MCF 10A (cell line): ENCODE measurements at regions of chr7 and their contacts with region 1.

Region 1: DNA sequence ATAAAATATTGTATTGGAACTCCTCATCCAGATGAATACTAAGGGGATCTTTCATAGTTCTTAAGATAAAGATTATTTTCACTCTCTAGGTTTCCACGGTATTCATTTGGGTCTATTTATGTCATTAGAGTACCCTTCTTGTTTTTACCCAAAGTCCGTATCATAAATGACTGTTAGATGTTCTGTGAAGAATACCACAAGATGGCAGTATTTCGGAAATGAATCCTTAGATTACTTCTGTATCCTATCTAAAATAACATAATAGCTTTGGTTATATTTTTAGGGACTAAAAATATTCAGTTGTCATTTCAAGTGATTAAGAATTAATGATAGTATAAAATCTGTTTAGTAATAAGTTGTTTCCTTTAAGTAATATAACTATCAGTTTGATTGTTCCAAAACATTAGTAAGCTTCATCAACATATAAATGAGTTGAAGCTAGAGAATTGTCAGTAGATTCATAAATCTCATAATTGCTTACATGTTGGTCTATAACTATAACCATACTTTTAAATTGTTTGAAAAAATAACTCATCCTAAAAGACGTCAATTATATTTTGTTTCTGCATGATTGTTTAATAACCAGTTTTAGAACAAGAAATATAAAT is 337.5 kb upstream of the KCND2 start:
- DNase-seq: peak; percentile 46
- H3K4me3 Mint-ChIP-seq: no peak overlapping the region
- H3K27ac Mint-ChIP-seq: no peak overlapping the region
- H3K4me1 Mint-ChIP-seq: no peaks in the 10 kb centered on the region
- H3K27me3 Mint-ChIP-seq: peaks cover 61% of the 10 kb centered on the region
- CTCF ChIP-seq: peak; percentile 26

Region 2: DNA sequence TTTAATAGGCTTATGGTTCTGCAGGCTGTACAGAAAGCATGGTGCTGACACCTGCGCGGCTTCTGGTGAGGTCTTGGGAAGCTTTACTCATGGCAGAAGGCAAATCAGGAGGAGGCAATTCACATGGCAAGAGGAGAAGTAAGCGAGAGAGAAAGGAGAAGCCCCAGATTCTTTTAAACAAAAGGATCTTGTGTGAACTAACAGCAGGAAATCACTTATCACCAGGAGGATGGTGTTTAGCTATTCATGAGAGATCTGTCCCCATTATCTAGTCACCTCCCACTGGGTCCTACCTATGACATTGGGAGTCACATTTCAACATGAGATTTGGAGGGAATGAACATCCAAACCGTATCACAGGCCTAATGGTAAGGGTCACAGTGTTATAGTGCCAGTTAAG is 340.6 kb before region 1 on chr7:
- CTCF ChIA-PET with region 1: no interaction called
- POLR2A ChIA-PET with region 1: no interaction called
- intact Hi-C with region 1: no loop called
- DNase-seq: no peak
- H3K4me3 Mint-ChIP-seq: no peak overlapping the region
- H3K27ac Mint-ChIP-seq: no peak overlapping the region
- H3K4me1 Mint-ChIP-seq: no peaks in the 10 kb centered on the region
- H3K27me3 Mint-ChIP-seq: peaks cover 55% of the 10 kb centered on the region
- CTCF ChIP-seq: no peak

Region 3: DNA sequence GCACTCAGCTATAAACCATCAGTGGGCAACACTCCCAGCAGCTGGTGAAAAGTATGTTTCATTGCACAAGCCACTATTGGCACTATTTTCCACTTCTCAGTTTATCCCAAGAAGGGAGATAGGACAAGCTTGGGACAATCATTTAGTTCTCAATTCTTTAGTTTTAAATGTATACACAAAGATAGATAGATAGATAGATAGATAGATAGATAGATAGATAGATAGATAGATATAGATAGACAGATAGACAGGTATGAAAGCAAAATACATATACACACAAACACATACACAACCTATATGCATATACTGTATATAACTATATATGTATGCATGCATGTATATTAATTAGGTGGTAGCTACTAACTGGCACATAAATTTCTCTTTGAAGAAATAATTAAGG is 74.1 kb before region 1 on chr7:
- CTCF ChIA-PET with region 1: no interaction called
- POLR2A ChIA-PET with region 1: no interaction called
- intact Hi-C with region 1: no loop called
- DNase-seq: no peak
- H3K4me3 Mint-ChIP-seq: no peak overlapping the region
- H3K27ac Mint-ChIP-seq: no peak overlapping the region
- H3K4me1 Mint-ChIP-seq: no peaks in the 10 kb centered on the region
- H3K27me3 Mint-ChIP-seq: no peaks in the 10 kb centered on the region
- CTCF ChIP-seq: no peak

Region 4: GRCh38 chr7:119890631-119891030 is 44.9 kb before region 1 on chr7:
- CTCF ChIA-PET with region 1: no interaction called
- POLR2A ChIA-PET with region 1: no interaction called
- intact Hi-C with region 1: no loop called
- DNase-seq: no peak
- H3K4me3 Mint-ChIP-seq: no peak overlapping the region
- H3K27ac Mint-ChIP-seq: no peak overlapping the region
- H3K4me1 Mint-ChIP-seq: no peaks in the 10 kb centered on the region
- H3K27me3 Mint-ChIP-seq: peaks cover 34% of the 10 kb centered on the region
- CTCF ChIP-seq: no peak

Region 5: GRCh38 chr7:120089968-120090367 is 154.4 kb after region 1 on chr7:
- CTCF ChIA-PET with region 1: no interaction called
- POLR2A ChIA-PET with region 1: no interaction called
- intact Hi-C with region 1: loop called (anchors 2 kb)
- DNase-seq: peak; percentile 33
- H3K4me3 Mint-ChIP-seq: no peak overlapping the region
- H3K27ac Mint-ChIP-seq: no peak overlapping the region
- H3K4me1 Mint-ChIP-seq: no peaks in the 10 kb centered on the region
- H3K27me3 Mint-ChIP-seq: peaks cover 91% of the 10 kb centered on the region
- CTCF ChIP-seq: no peak

Region 6: GRCh38 chr7:120272261-120272660 is 336.7 kb after region 1 on chr7:
- CTCF ChIA-PET with region 1: interaction called, 11 read pairs
- POLR2A ChIA-PET with region 1: no interaction called
- intact Hi-C with region 1: loop called (anchors 1 kb)
- DNase-seq: peak; percentile 51
- H3K4me3 Mint-ChIP-seq: peak overlapping the region; percentile 43
- H3K27ac Mint-ChIP-seq: no peak overlapping the region
- H3K4me1 Mint-ChIP-seq: no peaks in the 10 kb centered on the region
- H3K27me3 Mint-ChIP-seq: peaks cover 72% of the 10 kb centered on the region
- CTCF ChIP-seq: peak; percentile 57

Region 7: DNA sequence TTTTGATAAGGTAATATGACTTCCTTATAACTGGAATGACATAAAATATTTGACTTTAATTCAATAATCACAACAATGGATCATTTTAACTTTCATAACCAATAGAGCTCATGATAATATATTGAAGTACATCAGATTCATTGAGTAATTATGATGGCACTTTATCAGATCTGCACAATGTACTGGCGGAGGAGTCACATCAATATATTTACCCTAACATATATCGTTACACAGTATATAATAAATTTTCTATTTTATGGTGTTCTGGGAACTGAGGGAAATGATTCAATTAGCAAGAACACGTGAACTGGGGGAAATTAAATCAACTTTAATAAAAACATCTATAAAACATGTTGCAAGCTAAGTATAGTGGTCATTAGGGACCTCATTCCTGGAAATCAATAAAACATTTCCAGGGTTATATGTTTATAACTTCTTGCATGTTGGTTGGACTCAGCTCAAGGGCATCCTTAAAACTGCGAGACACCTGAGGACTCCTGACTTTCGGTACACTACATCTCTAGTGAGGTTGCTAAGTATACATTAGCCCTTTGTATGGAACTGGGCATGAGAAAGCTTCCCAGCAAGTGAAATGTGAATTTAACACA is 591.5 kb after region 1 on chr7:
- CTCF ChIA-PET with region 1: no interaction called
- POLR2A ChIA-PET with region 1: no interaction called
- intact Hi-C with region 1: no loop called
- DNase-seq: no peak
- H3K4me3 Mint-ChIP-seq: no peak overlapping the region
- H3K27ac Mint-ChIP-seq: no peak overlapping the region
- H3K4me1 Mint-ChIP-seq: no peaks in the 10 kb centered on the region
- H3K27me3 Mint-ChIP-seq: peaks cover 53% of the 10 kb centered on the region
- CTCF ChIP-seq: no peak

Region 8: GRCh38 chr7:120725376-120726039 is 790.0 kb after region 1 on chr7:
- CTCF ChIA-PET with region 1: interaction called, 3 read pairs
- POLR2A ChIA-PET with region 1: no interaction called
- intact Hi-C with region 1: loop called (anchors 5 kb)
- DNase-seq: peak; percentile 46
- H3K4me3 Mint-ChIP-seq: no peak overlapping the region
- H3K27ac Mint-ChIP-seq: no peak overlapping the region
- H3K4me1 Mint-ChIP-seq: no peaks in the 10 kb centered on the region
- H3K27me3 Mint-ChIP-seq: peaks cover 91% of the 10 kb centered on the region
- CTCF ChIP-seq: peak; percentile 57